ENCODE measurements at regions of chr3 and their contacts with region 1.

Region 1: GRCh38 chr3:52220380-52221026 is 4.9 kb downstream of the TLR9 start:
- DNase-seq: peak; percentile 82
- H3K4me3 Mint-ChIP-seq: no peak overlapping the region
- H3K27ac Mint-ChIP-seq: no peak overlapping the region
- H3K4me1 Mint-ChIP-seq: peaks cover 15% of the 10 kb centered on the region
- H3K27me3 Mint-ChIP-seq: no peaks in the 10 kb centered on the region
- CTCF ChIP-seq: peak; percentile 81

Region 2: GRCh38 chr3:51328206-51328605 is 892.3 kb before region 1 on chr3:
- CTCF ChIA-PET with region 1: no interaction called
- POLR2A ChIA-PET with region 1: no interaction called
- intact Hi-C with region 1: no loop called
- DNase-seq: no peak
- H3K4me3 Mint-ChIP-seq: no peak overlapping the region
- H3K27ac Mint-ChIP-seq: no peak overlapping the region
- H3K4me1 Mint-ChIP-seq: no peaks in the 10 kb centered on the region
- H3K27me3 Mint-ChIP-seq: no peaks in the 10 kb centered on the region
- CTCF ChIP-seq: no peak

Region 3: GRCh38 chr3:52154117-52155094 is 66.1 kb before region 1 on chr3 and contains the start of gene POC1A:
- CTCF ChIA-PET with region 1: interaction called, 6 read pairs
- POLR2A ChIA-PET with region 1: interaction called, 4 read pairs
- intact Hi-C with region 1: loop called (anchors 2 kb)
- DNase-seq: peak; percentile 99
- H3K4me3 Mint-ChIP-seq: peak within 1 kb of the TSS; percentile 93
- H3K27ac Mint-ChIP-seq: peak within 1 kb of the TSS; percentile 96
- H3K4me1 Mint-ChIP-seq: peaks cover 10% of the 10 kb centered on the region
- H3K27me3 Mint-ChIP-seq: no peaks in the 10 kb centered on the region
- CTCF ChIP-seq: no peak
- total RNA-seq, gene POC1A: 7.5 and 9.8 TPM in 2 replicates

Region 4: DNA sequence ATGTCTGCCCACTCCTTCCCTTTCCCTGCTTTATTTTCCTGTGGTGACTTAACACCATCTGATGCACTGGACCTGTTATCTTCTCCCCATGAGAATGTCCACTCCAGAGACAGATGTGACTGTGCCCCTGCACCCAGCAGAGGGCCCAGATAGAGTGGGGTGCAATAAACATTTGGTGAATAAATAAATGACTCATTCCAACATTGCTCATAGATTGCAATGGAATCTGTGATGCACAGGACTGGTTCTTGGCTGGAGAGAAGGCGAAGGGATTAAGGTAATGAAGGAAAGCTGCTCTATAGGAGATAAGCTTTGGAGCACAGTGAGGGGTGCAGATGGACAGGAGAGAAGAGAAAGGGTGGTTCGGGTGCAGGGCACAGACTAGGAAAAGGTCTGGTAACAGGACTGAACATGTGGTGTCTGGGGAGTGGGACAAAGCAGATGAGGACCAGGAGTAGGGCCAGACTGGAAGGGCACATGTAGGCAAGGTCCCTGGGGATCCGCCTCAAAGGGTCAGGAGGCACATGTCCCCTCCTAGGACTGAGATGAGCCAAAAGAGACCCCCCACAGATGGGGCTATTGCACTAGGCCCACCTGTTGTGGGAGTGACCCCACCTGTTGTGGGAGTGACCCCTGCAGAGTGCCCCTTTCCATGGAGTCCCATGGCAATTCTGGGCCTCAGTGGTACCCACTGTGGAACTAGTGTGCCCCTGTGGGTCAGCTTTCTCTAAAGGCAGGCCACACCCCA is 48.8 kb before region 1 on chr3:
- CTCF ChIA-PET with region 1: interaction called, 3 read pairs
- POLR2A ChIA-PET with region 1: no interaction called
- intact Hi-C with region 1: loop called (anchors 2 kb)
- DNase-seq: peak; percentile 36
- H3K4me3 Mint-ChIP-seq: no peak overlapping the region
- H3K27ac Mint-ChIP-seq: no peak overlapping the region
- H3K4me1 Mint-ChIP-seq: peaks cover 18% of the 10 kb centered on the region
- H3K27me3 Mint-ChIP-seq: no peaks in the 10 kb centered on the region
- CTCF ChIP-seq: no peak

Region 5: DNA sequence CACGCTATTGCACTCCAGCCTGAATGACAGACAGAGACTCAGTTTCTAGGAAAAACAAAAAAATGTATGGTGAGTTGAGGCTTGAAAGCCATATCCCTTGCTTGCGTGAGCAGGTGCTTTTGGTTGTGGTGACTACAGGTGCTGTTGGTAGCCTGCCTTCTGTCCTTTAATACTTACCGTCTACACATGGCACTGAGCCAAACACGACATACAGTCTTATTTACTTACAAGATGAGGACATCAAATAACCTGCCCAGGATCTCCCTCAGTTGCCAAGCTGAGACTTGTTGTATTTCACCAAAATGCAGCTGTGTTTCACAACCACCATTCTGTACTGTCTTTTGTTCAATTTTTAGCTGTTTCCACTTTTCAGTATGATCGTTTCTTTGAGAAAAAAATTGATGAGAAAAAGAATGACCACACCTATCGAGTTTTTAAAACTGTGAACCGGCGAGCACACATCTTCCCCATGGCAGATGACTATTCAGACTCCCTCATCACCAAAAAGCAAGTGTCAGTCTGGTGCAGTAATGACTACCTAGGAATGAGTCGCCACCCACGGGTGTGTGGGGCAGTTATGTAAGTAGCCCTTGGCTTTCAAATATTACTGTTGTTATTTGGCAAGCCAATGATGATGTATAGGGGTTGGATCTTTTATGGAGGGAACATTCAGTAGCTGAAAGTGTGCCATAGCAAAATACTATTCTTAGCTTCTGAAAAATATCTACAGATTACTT is 16.0 kb before region 1 on chr3:
- CTCF ChIA-PET with region 1: interaction called, 46 read pairs
- POLR2A ChIA-PET with region 1: interaction called, 17 read pairs
- intact Hi-C with region 1: no loop called
- DNase-seq: peak; percentile 92
- H3K4me3 Mint-ChIP-seq: no peak overlapping the region
- H3K27ac Mint-ChIP-seq: no peak overlapping the region
- H3K4me1 Mint-ChIP-seq: peaks cover 20% of the 10 kb centered on the region
- H3K27me3 Mint-ChIP-seq: no peaks in the 10 kb centered on the region
- CTCF ChIP-seq: no peak

Region 6: GRCh38 chr3:52238761-52239701 is 18.5 kb after region 1 on chr3 and contains the start of gene TWF2:
- CTCF ChIA-PET with region 1: interaction called, 175 read pairs
- POLR2A ChIA-PET with region 1: interaction called, 19 read pairs
- intact Hi-C with region 1: no loop called
- DNase-seq: peak; percentile 70
- H3K4me3 Mint-ChIP-seq: peak within 1 kb of the TSS; percentile 86
- H3K27ac Mint-ChIP-seq: peak within 1 kb of the TSS; percentile 87
- H3K4me1 Mint-ChIP-seq: peaks cover 31% of the 10 kb centered on the region
- H3K27me3 Mint-ChIP-seq: no peaks in the 10 kb centered on the region
- CTCF ChIP-seq: no peak
- total RNA-seq, gene TWF2: 30.5 and 47.0 TPM in 2 replicates

Region 7: DNA sequence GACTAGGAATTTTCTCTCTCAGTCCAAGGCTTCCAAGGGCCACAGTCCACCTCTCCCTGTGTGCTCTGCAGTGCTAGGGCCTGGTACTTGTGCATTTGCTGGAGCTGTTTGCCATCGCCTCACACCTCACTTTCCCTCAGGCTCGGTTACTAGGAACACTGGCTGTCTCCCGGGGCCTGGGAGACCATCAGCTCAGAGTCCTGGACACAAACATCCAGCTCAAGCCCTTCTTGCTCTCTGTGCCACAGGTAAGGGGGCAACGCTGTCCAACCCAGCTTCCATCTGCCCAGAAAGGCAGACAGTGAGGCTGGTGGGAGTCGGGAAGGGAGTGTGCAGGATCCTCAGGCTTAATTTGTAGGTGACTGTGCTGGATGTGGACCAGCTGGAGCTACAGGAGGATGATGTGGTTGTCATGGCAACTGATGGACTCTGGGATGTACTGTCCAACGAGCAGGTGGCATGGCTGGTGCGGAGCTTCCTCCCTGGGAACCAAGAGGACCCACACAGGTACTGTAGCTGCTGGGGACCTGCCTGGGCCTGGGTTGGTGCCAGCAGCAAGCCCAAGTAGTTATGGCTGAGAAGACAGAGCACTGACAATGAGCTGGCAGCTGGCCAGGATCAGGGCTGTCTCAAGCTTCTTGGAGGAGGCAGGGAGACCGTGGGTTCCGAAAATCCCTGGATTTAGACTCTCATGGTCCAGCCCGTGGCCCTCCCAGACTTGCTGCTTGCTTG is 28.5 kb after region 1 on chr3:
- CTCF ChIA-PET with region 1: interaction called, 15 read pairs
- POLR2A ChIA-PET with region 1: interaction called, 4 read pairs
- intact Hi-C with region 1: no loop called
- DNase-seq: peak; percentile 54
- H3K4me3 Mint-ChIP-seq: no peak overlapping the region
- H3K27ac Mint-ChIP-seq: no peak overlapping the region
- H3K4me1 Mint-ChIP-seq: peaks cover 10% of the 10 kb centered on the region
- H3K27me3 Mint-ChIP-seq: no peaks in the 10 kb centered on the region
- CTCF ChIP-seq: no peak

Region 8: GRCh38 chr3:52278510-52279069 is 58.1 kb after region 1 on chr3 and contains the start of gene WDR82:
- CTCF ChIA-PET with region 1: interaction called, 22 read pairs
- POLR2A ChIA-PET with region 1: interaction called, 17 read pairs
- intact Hi-C with region 1: no loop called
- DNase-seq: peak; percentile 90
- H3K4me3 Mint-ChIP-seq: peak within 1 kb of the TSS; percentile 84
- H3K27ac Mint-ChIP-seq: peak within 1 kb of the TSS; percentile 99
- H3K4me1 Mint-ChIP-seq: peaks cover 26% of the 10 kb centered on the region
- H3K27me3 Mint-ChIP-seq: no peaks in the 10 kb centered on the region
- CTCF ChIP-seq: peak; percentile 38
- total RNA-seq, gene WDR82: 60.7 and 62.5 TPM in 2 replicates

Region 9: GRCh38 chr3:52454250-52454937 is 233.9 kb after region 1 on chr3:
- CTCF ChIA-PET with region 1: no interaction called
- POLR2A ChIA-PET with region 1: no interaction called
- intact Hi-C with region 1: no loop called
- DNase-seq: no peak
- H3K4me3 Mint-ChIP-seq: peak overlapping the region; percentile 92
- H3K27ac Mint-ChIP-seq: peak overlapping the region; percentile 95
- H3K4me1 Mint-ChIP-seq: peaks cover 26% of the 10 kb centered on the region
- H3K27me3 Mint-ChIP-seq: no peaks in the 10 kb centered on the region
- CTCF ChIP-seq: no peak

Region 10: DNA sequence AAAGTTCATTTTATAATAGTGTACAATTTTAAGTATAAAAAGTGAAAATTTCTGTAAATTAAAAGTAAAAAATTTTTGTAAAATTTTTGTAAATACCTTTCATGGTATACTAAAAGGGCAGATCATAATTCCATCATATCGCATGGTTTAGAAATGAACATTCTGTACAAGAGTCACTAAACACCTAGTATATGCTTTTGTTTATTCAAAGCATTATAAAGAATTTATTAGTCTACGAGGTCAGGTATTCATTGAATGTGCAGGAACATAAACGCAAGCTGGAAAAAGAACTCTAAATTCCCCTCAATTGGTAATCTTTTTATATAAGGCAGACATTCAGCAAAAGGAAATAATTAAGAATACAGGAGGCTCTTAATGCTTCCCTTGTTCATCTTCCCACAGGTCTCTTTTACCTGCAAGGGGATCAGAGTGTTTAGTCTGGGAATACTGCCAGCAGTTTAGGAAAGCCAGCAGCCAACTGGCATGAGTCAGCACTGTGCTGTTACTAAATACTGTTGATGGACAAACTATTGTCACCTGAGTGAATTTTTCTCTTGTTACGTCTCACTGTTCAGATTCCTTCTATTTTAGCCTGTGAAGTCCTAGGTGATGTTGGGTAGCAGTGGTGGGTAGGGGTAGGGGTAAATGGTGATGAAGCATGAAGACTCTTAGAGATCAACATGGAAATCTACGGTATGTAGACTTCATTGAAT is 386.0 kb after region 1 on chr3:
- CTCF ChIA-PET with region 1: no interaction called
- POLR2A ChIA-PET with region 1: no interaction called
- intact Hi-C with region 1: no loop called
- DNase-seq: peak; percentile 94
- H3K4me3 Mint-ChIP-seq: no peak overlapping the region
- H3K27ac Mint-ChIP-seq: peak overlapping the region; percentile 59
- H3K4me1 Mint-ChIP-seq: peaks cover 14% of the 10 kb centered on the region
- H3K27me3 Mint-ChIP-seq: no peaks in the 10 kb centered on the region
- CTCF ChIP-seq: no peak

Region 11: DNA sequence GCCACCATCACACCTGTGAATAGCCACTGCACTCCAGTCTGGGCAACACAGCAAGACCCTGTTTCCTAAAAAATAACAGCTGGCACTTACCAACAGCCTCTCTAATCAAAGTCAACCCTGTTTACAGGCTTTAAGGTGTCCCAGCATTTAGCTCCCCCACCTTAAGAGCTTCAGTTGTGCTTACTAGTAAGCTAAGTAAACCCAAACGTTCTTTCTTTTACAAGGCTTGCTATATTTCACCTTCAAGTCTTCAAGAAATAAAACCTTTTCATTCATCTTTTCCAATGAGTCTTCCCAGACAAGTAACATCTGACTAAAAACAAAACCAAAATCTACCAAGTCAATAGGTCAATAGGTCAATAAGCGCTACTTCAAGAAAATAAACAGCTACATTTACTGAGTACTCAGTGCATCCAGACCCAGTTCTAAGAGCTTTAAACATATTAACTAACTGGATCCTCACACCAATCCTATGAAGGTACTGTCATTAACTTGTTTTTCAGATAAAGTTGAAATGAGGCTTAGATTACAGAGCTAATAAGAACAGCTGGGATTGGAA is 402.8 kb after region 1 on chr3:
- CTCF ChIA-PET with region 1: no interaction called
- POLR2A ChIA-PET with region 1: no interaction called
- intact Hi-C with region 1: no loop called
- DNase-seq: no peak
- H3K4me3 Mint-ChIP-seq: no peak overlapping the region
- H3K27ac Mint-ChIP-seq: no peak overlapping the region
- H3K4me1 Mint-ChIP-seq: no peaks in the 10 kb centered on the region
- H3K27me3 Mint-ChIP-seq: no peaks in the 10 kb centered on the region
- CTCF ChIP-seq: no peak

Measured in MCF 10A (cell line).